ENCODE measurements at regions of chr9 and their contacts with region 1.

Region 1: GRCh38 chr9:34145165-34145564 is 18.7 kb upstream of the DCAF12 start:
- DNase-seq: no peak
- H3K4me3 ChIP-seq: no peak overlapping the region
- H3K27ac ChIP-seq: no peak overlapping the region
- H3K4me1 ChIP-seq: no peaks in the 10 kb centered on the region
- H3K27me3 ChIP-seq: peaks cover 0 to 2% of the 10 kb centered on the region in 2 experiments
- CTCF ChIP-seq: no peak
- POLR2A ChIP-seq: no peak

Region 2: GRCh38 chr9:34178520-34179212 is 33.5 kb after region 1 on chr9 and contains the start of gene UBAP1:
- CTCF ChIA-PET with region 1: interaction called, 3 read pairs
- POLR2A ChIA-PET with region 1: interaction called, 11 read pairs
- dilution Hi-C with region 1: no loop called
- intact Hi-C with region 1: no loop called
- DNase-seq: peak; percentile 99
- H3K4me3 ChIP-seq: peak within 1 kb of the TSS; percentile 51 to 87 (median 79)
- H3K27ac ChIP-seq: peak within 1 kb of the TSS; percentile 58
- H3K4me1 ChIP-seq: no peaks in the 10 kb centered on the region
- H3K27me3 ChIP-seq: no peaks in the 10 kb centered on the region
- CTCF ChIP-seq: no peak
- POLR2A ChIP-seq: peak; percentile 64
- total RNA-seq, gene UBAP1: 38.0 and 38.8 TPM in 2 replicates

Measured in endothelial cell of umbilical vein (primary cell).